CD4-positive, alpha-beta memory T cell (primary cell): ENCODE measurements at regions of chr1 and their contacts with region 1.

Region 1: GRCh38 chr1:89274411-89274857 is 1.8 kb upstream of the GBP5 start:
- DNase-seq: peak; percentile 43 to 63 (median 49)
- H3K4me3 ChIP-seq: peak overlapping the region in 1 of 2 donors; percentile 29
- H3K4me3 Mint-ChIP-seq: peak overlapping the region; percentile 78 to 90 (median 88)
- H3K27ac ChIP-seq: peak overlapping the region; percentile 74
- H3K27ac Mint-ChIP-seq: peak overlapping the region; percentile 93 to 99 (median 98)
- H3K4me1 ChIP-seq: peaks cover 68% of the 10 kb centered on the region
- H3K4me1 Mint-ChIP-seq: peaks cover 46 to 91% (median 62%) of the 10 kb centered on the region in 4 donors
- H3K27me3 ChIP-seq: no peaks in the 10 kb centered on the region
- H3K27me3 Mint-ChIP-seq: no peaks in the 10 kb centered on the region

Region 2: DNA sequence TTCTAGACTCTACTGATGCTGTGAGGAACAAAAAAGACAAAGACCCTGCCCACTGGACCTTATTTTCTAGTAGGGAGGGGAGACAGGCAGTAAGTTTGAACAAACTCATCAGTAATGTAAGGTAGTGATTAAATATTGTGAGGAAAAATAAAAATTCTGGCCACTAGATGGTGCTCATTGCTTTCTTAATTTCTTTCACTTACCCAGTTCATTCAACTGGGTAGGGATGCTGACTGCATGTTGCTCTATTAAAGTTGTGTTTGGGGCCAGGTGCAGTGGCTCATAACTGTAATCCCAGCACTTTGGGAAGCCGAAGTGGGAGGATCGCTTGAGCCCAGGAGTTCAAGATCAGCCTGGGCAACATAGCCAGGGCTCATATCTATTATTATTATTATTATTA is 275.7 kb before region 1 on chr1:
- CTCF ChIA-PET with region 1: interaction called, 73 read pairs
- POLR2A ChIA-PET with region 1: interaction called, 5 read pairs
- intact Hi-C with region 1: loop called (anchors 1 kb)
- DNase-seq: peak; percentile 51 to 74 (median 71)
- H3K4me3 ChIP-seq: no peak overlapping the region
- H3K4me3 Mint-ChIP-seq: no peak overlapping the region
- H3K27ac ChIP-seq: no peak overlapping the region
- H3K27ac Mint-ChIP-seq: no peak overlapping the region
- H3K4me1 ChIP-seq: peaks cover 25% of the 10 kb centered on the region
- H3K4me1 Mint-ChIP-seq: peaks cover 20 to 40% (median 30%) of the 10 kb centered on the region in 4 donors
- H3K27me3 ChIP-seq: no peaks in the 10 kb centered on the region
- H3K27me3 Mint-ChIP-seq: no peaks in the 10 kb centered on the region

Region 3: DNA sequence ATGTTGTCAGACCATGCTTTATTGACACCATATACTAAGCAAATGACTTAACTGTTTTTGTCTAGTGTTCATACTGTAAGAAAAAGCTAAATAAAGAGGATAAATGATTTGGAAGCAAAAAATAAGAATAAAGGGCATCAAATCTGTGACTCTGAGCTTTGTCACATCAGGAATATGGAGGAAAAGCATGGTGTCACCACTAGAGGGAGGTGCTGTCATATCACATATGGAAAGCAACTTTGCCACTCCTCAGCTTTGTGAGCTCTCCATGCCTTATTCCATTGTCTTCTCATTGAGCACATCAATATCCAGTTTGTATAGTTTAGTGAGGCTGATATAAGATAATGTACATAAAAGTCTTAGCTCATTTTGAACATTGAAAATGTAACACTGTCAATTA is 188.7 kb before region 1 on chr1:
- CTCF ChIA-PET with region 1: interaction called, 44 read pairs
- POLR2A ChIA-PET with region 1: interaction called, 4 read pairs
- intact Hi-C with region 1: loop called (anchors 1 kb)
- DNase-seq: peak in 4 of 5 donors; percentile 45 to 66 (median 48)
- H3K4me3 ChIP-seq: no peak overlapping the region
- H3K4me3 Mint-ChIP-seq: no peak overlapping the region
- H3K27ac ChIP-seq: no peak overlapping the region
- H3K27ac Mint-ChIP-seq: no peak overlapping the region
- H3K4me1 ChIP-seq: no peaks in the 10 kb centered on the region
- H3K4me1 Mint-ChIP-seq: peaks cover 0 to 4% (median 2%) of the 10 kb centered on the region in 4 donors
- H3K27me3 ChIP-seq: no peaks in the 10 kb centered on the region
- H3K27me3 Mint-ChIP-seq: no peaks in the 10 kb centered on the region

Region 4: GRCh38 chr1:89171067-89171438 is 103.4 kb before region 1 on chr1:
- CTCF ChIA-PET with region 1: no interaction called
- POLR2A ChIA-PET with region 1: no interaction called
- intact Hi-C with region 1: no loop called
- DNase-seq: no peak
- H3K4me3 ChIP-seq: no peak overlapping the region
- H3K4me3 Mint-ChIP-seq: no peak overlapping the region
- H3K27ac ChIP-seq: no peak overlapping the region
- H3K27ac Mint-ChIP-seq: no peak overlapping the region
- H3K4me1 ChIP-seq: no peaks in the 10 kb centered on the region
- H3K4me1 Mint-ChIP-seq: no peaks in the 10 kb centered on the region
- H3K27me3 ChIP-seq: no peaks in the 10 kb centered on the region
- H3K27me3 Mint-ChIP-seq: no peaks in the 10 kb centered on the region

Region 5: GRCh38 chr1:89211035-89211634 is 63.3 kb before region 1 on chr1:
- CTCF ChIA-PET with region 1: no interaction called
- POLR2A ChIA-PET with region 1: no interaction called
- intact Hi-C with region 1: no loop called
- DNase-seq: no peak
- H3K4me3 ChIP-seq: no peak overlapping the region
- H3K4me3 Mint-ChIP-seq: peak overlapping the region in 1 of 8 donors; percentile 36
- H3K27ac ChIP-seq: no peak overlapping the region
- H3K27ac Mint-ChIP-seq: no peak overlapping the region
- H3K4me1 ChIP-seq: no peaks in the 10 kb centered on the region
- H3K4me1 Mint-ChIP-seq: peaks cover 0 to 2% (median under 1%) of the 10 kb centered on the region in 4 donors
- H3K27me3 ChIP-seq: no peaks in the 10 kb centered on the region
- H3K27me3 Mint-ChIP-seq: no peaks in the 10 kb centered on the region

Region 6: GRCh38 chr1:89243046-89243445 is 31.4 kb before region 1 on chr1:
- CTCF ChIA-PET with region 1: no interaction called
- POLR2A ChIA-PET with region 1: no interaction called
- intact Hi-C with region 1: no loop called
- DNase-seq: no peak
- H3K4me3 ChIP-seq: no peak overlapping the region
- H3K4me3 Mint-ChIP-seq: no peak overlapping the region
- H3K27ac ChIP-seq: no peak overlapping the region
- H3K27ac Mint-ChIP-seq: no peak overlapping the region
- H3K4me1 ChIP-seq: no peaks in the 10 kb centered on the region
- H3K4me1 Mint-ChIP-seq: peaks cover 3 to 29% (median 10%) of the 10 kb centered on the region in 4 donors
- H3K27me3 ChIP-seq: no peaks in the 10 kb centered on the region
- H3K27me3 Mint-ChIP-seq: no peaks in the 10 kb centered on the region

Region 7: DNA sequence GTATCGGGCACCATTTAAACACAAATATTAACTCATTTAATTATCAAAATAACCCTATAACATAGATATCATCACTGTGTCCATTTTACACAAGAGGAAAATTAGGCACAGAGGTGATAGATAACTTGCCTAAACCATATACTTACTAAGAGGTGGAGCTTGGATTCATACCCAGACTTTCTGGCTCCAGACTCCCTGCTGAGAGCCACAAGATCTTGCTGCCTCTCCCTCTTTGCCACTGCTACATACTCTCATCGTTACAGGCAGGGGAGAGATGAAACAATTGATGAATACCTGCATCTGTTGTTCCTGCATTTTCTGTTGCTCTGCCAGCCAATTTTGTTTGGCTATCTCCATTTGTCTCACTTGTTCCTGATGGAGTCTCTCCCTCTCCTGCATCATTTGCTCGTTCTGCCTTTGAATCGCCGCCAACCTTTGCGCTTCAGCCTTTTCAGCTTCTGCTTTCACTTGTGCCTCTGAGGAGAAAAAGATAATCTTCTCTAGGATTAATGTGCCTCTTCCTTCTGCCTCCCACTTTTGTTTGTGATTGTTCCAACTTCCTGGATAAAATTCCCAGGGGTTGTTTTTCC is 12.4 kb before region 1 on chr1:
- CTCF ChIA-PET with region 1: interaction called, 6 read pairs
- POLR2A ChIA-PET with region 1: interaction called, 72 read pairs
- intact Hi-C with region 1: loop called (anchors 2 kb)
- DNase-seq: no peak
- H3K4me3 ChIP-seq: peak overlapping the region in 1 of 2 donors; percentile 29
- H3K4me3 Mint-ChIP-seq: peak overlapping the region in 7 of 8 donors; percentile 32 to 74 (median 42)
- H3K27ac ChIP-seq: no peak overlapping the region
- H3K27ac Mint-ChIP-seq: peak overlapping the region; percentile 18 to 90 (median 75)
- H3K4me1 ChIP-seq: peaks cover 92% of the 10 kb centered on the region
- H3K4me1 Mint-ChIP-seq: peaks cover 58 to 75% (median 66%) of the 10 kb centered on the region in 4 donors
- H3K27me3 ChIP-seq: no peaks in the 10 kb centered on the region
- H3K27me3 Mint-ChIP-seq: no peaks in the 10 kb centered on the region

Region 8: GRCh38 chr1:89358287-89358893 is 84.0 kb after region 1 on chr1:
- CTCF ChIA-PET with region 1: interaction called, 43 read pairs
- POLR2A ChIA-PET with region 1: interaction called, 7 read pairs
- intact Hi-C with region 1: loop called (anchors 1 kb)
- DNase-seq: peak; percentile 76 to 81 (median 77)
- H3K4me3 ChIP-seq: no peak overlapping the region
- H3K4me3 Mint-ChIP-seq: peak overlapping the region in 5 of 8 donors; percentile 0 to 80 (median 57)
- H3K27ac ChIP-seq: no peak overlapping the region
- H3K27ac Mint-ChIP-seq: peak overlapping the region in 5 of 7 donors; percentile 50 to 66 (median 57)
- H3K4me1 ChIP-seq: peaks cover 27% of the 10 kb centered on the region
- H3K4me1 Mint-ChIP-seq: peaks cover 15 to 29% (median 25%) of the 10 kb centered on the region in 4 donors
- H3K27me3 ChIP-seq: no peaks in the 10 kb centered on the region
- H3K27me3 Mint-ChIP-seq: no peaks in the 10 kb centered on the region

Region 9: GRCh38 chr1:89407360-89407759 is 132.9 kb after region 1 on chr1:
- CTCF ChIA-PET with region 1: no interaction called
- POLR2A ChIA-PET with region 1: no interaction called
- intact Hi-C with region 1: no loop called
- DNase-seq: peak in 1 of 5 donors; percentile 1
- H3K4me3 ChIP-seq: peak overlapping the region; percentile 34 to 46
- H3K4me3 Mint-ChIP-seq: peak overlapping the region; percentile 83 to 96 (median 88)
- H3K27ac ChIP-seq: peak overlapping the region; percentile 24
- H3K27ac Mint-ChIP-seq: peak overlapping the region; percentile 61 to 89 (median 82)
- H3K4me1 ChIP-seq: peaks cover 24% of the 10 kb centered on the region
- H3K4me1 Mint-ChIP-seq: peaks cover 25 to 38% (median 32%) of the 10 kb centered on the region in 4 donors
- H3K27me3 ChIP-seq: no peaks in the 10 kb centered on the region
- H3K27me3 Mint-ChIP-seq: peaks cover 0 to 2% of the 10 kb centered on the region in 2 donors